T-cell (primary cell): ENCODE measurements at regions of chr12 and their contacts with region 1.

Region 1: DNA sequence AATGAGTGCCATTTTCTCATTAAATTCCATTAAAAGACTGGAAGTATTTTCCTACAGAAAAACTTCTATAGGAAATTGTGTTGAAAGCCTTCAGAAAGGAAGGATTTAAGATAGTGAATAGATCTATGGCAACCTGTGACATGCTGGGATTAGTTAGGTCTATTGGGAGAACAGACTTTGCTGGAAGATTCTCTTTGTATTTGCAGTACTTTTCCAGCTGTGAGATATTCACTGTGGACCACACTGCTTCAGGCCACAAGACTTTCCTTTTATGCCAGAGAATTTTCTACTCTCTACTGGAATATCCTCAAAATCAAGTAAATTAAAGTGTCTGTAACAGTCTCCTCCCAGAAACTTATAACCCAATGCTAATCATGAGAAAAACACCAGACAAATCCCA is 136.2 kb downstream of the MYRFL start:
- DNase-seq: no peak
- ATAC-seq: no peak
- H3K4me3 ChIP-seq: no peak overlapping the region
- H3K4me3 Mint-ChIP-seq: no peak overlapping the region
- H3K27ac ChIP-seq: no peak overlapping the region
- H3K27ac Mint-ChIP-seq: no peak overlapping the region
- H3K4me1 ChIP-seq: no peaks in the 10 kb centered on the region
- H3K4me1 Mint-ChIP-seq: no peaks in the 10 kb centered on the region
- H3K27me3 ChIP-seq: no peaks in the 10 kb centered on the region
- H3K27me3 Mint-ChIP-seq: peaks cover 8 to 14% of the 10 kb centered on the region in 2 donors

Region 2: DNA sequence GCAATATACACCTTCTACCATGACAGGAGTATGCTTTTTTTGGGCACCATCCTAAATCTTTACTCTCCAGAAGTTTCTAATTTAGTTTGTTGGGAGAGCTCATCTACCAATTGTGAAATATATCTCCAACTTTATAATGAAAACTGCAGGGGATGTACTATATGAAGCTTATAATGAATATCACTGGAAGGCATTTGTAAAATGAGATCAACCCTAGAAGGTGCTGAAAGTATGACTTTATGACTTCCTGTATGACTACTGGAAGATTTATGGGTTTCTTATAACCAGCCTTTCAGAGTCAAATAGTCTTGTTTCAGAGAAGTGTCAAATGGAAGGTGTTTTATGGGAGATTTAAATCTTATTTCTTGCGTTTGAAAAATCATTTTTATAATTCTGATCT is 13.3 kb before region 1 on chr12:
- CTCF ChIA-PET with region 1: no interaction called
- POLR2A ChIA-PET with region 1: no interaction called
- DNase-seq: no peak
- ATAC-seq: no peak
- H3K4me3 ChIP-seq: no peak overlapping the region
- H3K4me3 Mint-ChIP-seq: no peak overlapping the region
- H3K27ac ChIP-seq: no peak overlapping the region
- H3K27ac Mint-ChIP-seq: no peak overlapping the region
- H3K4me1 ChIP-seq: no peaks in the 10 kb centered on the region
- H3K4me1 Mint-ChIP-seq: no peaks in the 10 kb centered on the region
- H3K27me3 ChIP-seq: no peaks in the 10 kb centered on the region
- H3K27me3 Mint-ChIP-seq: no peaks in the 10 kb centered on the region

Region 3: DNA sequence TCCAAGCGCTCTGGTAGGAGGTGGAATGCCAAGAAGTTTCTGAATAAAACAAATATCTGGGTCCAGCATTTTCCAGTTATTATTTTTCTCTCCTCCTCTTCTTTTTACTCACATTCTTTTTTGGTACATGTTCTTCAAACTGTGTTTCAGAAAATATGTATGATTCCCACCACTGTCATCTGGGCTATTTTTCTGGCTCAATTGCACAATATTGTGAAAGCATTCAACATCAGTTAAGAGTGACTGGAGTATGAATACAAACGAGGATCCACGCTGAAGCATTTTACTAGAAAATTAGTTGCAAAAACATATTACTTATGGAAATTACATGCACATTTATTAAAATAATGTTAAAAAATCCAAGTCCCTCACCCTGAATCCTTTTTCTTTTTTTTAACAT is 466.4 kb after region 1 on chr12:
- CTCF ChIA-PET with region 1: no interaction called
- POLR2A ChIA-PET with region 1: interaction called in 1 of 2 experiments, 11 read pairs
- DNase-seq: no peak
- ATAC-seq: no peak
- H3K4me3 ChIP-seq: no peak overlapping the region
- H3K4me3 Mint-ChIP-seq: no peak overlapping the region
- H3K27ac ChIP-seq: no peak overlapping the region
- H3K27ac Mint-ChIP-seq: no peak overlapping the region
- H3K4me1 ChIP-seq: no peaks in the 10 kb centered on the region
- H3K4me1 Mint-ChIP-seq: no peaks in the 10 kb centered on the region
- H3K27me3 ChIP-seq: no peaks in the 10 kb centered on the region
- H3K27me3 Mint-ChIP-seq: no peaks in the 10 kb centered on the region